Posterior vena cava (tissue), 2 donors: ENCODE measurements at regions of chr12 and their contacts with region 1.

Region 1: DNA sequence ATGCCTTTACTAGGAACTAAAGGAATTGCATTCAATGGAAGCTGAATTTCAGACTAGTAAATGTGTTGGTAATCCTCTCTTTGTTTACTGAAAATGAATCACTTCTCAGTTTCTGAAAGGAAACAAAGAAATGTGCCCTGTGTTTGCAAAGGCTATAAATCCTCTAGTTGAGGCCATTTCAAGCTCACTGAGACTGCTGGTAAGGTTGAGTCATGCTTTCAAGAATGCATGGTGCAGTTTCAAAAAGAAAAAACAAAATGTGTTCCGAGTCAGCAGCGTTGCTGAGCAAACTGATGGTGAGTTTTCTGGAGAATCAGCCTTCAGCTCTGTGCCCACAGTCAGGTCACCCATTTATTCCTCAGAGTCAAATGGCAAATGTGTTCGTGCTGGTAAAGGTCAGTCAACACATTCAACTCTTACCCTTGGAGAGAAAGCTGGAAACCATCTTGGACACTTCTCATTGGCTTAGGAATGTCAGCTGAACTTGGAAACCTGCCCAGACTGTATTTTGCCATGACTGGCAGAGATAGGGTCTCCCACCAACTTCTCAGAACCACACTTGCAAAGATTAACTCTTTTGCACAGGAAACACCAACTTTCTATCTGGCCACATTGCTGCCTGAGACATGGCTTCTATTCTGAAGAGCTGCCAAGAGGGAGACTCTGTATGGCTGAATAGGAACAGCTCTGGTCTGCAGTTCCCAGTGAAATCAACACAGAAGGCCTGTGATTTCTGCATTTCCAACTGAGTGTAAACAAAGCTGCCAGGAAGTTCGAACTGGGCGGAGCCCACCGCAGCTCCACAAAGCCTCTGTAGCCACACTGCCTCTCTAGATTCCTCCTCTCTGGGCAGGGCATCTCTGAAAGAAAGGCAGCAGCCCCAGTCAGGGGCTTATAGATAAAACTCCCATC is 484.4 kb downstream of the ATP23 start:
- DNase-seq: no peak

Region 2: GRCh38 chr12:58364389-58365086 is 61.2 kb before region 1 on chr12:
- intact Hi-C with region 1: no loop called
- DNase-seq: no peak

Region 3: GRCh38 chr12:58463051-58463450 is 37.3 kb after region 1 on chr12:
- intact Hi-C with region 1: loop called in 1 of 2 experiments (anchors 2 kb)
- DNase-seq: no peak